Prostate gland (tissue), 2 donors: ENCODE measurements at regions of chr1 and their contacts with region 1.

Region 1: GRCh38 chr1:904310-904950 is 19.3 kb upstream of the SAMD11 start:
- DNase-seq: peak; percentile 75
- H3K4me3 ChIP-seq: peak overlapping the region; percentile 39 to 41
- H3K27ac ChIP-seq: peak overlapping the region in 1 of 2 donors; percentile 41
- H3K4me1 ChIP-seq: no peaks in the 10 kb centered on the region
- H3K27me3 ChIP-seq: no peaks in the 10 kb centered on the region
- CTCF ChIP-seq: peak; percentile 97 to 99 (median 98)
- POLR2A ChIP-seq: no peak

Region 2: DNA sequence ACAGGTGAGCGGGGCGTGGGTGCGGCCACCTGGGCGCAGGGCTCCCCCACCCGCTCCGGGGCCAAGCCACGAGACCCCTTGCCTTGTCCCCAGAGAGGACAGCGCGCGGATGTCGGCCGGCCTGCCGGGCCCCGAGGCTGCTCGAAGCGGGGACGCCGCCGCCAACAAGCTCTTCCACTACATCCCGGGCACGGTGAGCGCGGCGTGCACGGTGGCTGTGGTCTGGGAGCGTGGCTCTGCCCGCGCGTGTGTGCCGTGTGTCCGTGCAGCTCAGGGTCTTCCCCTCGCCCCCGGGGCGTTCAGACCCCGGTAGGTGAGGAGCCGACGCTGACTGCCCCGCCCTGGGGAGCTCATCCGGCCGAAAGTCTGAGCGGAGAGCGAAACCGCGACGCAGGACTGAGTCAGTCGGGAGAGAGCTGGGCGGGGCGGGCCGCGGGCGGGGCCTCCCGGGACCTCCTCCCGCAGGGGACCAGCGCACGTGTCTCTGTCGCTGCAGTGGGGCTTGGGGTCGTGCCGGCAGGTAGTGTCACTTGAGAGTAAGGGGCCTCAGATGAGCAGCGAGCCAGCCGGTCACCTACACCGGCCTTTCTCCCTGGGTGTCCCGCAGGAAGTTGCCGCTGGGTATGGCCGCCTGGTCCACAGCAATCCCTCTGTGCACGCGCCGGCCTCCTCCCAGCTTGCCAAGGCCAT is 62.3 kb after region 1 on chr1:
- intact Hi-C with region 1: loop called (anchors 5 kb)
- DNase-seq: peak; percentile 71
- H3K4me3 ChIP-seq: peak overlapping the region; percentile 47 to 55
- H3K27ac ChIP-seq: peak overlapping the region; percentile 85 to 89
- H3K4me1 ChIP-seq: peaks cover 6% of the 10 kb centered on the region
- H3K27me3 ChIP-seq: no peaks in the 10 kb centered on the region
- CTCF ChIP-seq: no peak
- POLR2A ChIP-seq: peak; percentile 75

Region 3: GRCh38 chr1:975896-976683 is 71.7 kb after region 1 on chr1:
- intact Hi-C with region 1: loop called (anchors 2 kb)
- DNase-seq: peak; percentile 79
- H3K4me3 ChIP-seq: peak overlapping the region; percentile 36 to 40
- H3K27ac ChIP-seq: peak overlapping the region; percentile 82 to 85
- H3K4me1 ChIP-seq: peaks cover 2% of the 10 kb centered on the region
- H3K27me3 ChIP-seq: no peaks in the 10 kb centered on the region
- CTCF ChIP-seq: peak; percentile 43 to 95 (median 75)
- POLR2A ChIP-seq: peak; percentile 19

Region 4: DNA sequence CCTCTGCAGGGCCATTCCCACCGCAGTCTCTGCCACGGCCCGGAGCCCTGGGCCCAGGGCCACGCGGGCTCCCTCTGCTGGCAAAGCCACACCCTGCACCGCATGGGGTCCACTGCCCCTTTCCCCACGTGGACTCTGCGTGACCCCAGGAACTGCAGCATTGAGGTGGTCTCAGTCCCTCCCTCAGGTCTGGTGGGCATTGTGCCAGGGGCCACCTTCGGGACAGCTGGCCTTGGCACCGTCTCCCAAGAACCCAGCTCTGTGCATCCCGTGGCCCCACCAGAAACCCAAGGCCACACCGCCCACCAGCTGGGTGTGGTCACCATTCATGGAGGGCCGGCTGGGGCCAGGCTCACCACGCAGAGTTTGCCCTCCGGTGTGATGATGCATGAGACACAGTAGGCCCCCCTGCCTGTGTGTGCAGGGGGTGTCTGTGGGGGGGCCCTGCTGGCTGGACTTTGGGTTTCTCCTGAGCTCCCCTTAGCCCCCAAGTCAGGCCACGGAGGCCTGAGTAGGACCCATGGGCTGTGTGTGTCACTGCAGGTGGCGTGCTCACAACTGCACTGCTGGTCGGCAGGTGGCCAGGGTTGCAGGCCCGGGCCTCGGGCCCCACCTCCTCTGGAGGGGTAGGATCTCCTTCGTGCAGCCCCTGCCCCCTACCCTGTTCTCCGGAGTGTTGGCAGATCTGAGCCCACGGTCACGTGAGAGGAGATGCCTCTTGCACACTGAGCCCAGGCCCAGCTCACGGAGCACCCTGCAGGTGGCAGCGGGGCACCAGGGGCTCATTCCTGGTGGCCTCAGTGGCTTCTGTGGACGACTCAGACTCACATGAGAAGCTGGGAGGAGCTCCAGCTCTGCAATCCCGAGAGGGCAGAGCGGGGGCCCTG is 536.8 kb after region 1 on chr1:
- intact Hi-C with region 1: no loop called
- DNase-seq: no peak
- H3K4me3 ChIP-seq: no peak overlapping the region
- H3K27ac ChIP-seq: peak overlapping the region in 1 of 2 donors; percentile 0
- H3K4me1 ChIP-seq: peaks cover 13% of the 10 kb centered on the region
- H3K27me3 ChIP-seq: no peaks in the 10 kb centered on the region
- CTCF ChIP-seq: peak; percentile 74 to 91 (median 88)
- POLR2A ChIP-seq: no peak